ENCODE measurements at regions of chr19 and their contacts with region 1.

Region 1: GRCh38 chr19:19185853-19186740 is 5.9 kb downstream of the BORCS8 start:
- DNase-seq: peak; percentile 89
- ATAC-seq: peak; percentile 100
- H3K4me3 Mint-ChIP-seq: no peak overlapping the region
- H3K27ac Mint-ChIP-seq: peak overlapping the region; percentile 84
- H3K4me1 Mint-ChIP-seq: peaks cover 11% of the 10 kb centered on the region
- H3K27me3 Mint-ChIP-seq: no peaks in the 10 kb centered on the region
- CTCF ChIP-seq: peak; percentile 93

Region 2: DNA sequence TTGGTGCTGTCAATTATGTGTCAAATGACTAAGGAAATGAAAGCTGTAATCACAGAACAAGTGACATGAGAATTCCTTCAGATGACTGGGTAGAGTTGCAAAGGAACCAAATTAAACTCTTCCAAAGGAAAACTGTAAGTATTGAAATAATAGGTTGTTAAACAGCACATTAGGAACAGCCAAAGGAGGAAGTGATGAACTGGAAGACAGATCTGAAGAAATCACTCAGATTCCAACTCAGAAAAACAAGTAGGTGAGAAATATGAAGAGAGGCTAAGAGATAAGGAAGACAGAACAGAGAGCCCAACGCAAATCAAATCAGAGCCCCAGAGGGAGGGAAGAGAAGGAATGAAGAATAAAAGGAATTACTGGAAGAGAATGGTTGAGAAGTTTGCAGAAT is 63.2 kb before region 1 on chr19:
- CTCF ChIA-PET with region 1: no interaction called
- POLR2A ChIA-PET with region 1: no interaction called
- DNase-seq: no peak
- ATAC-seq: no peak
- H3K4me3 Mint-ChIP-seq: no peak overlapping the region
- H3K27ac Mint-ChIP-seq: no peak overlapping the region
- H3K4me1 Mint-ChIP-seq: no peaks in the 10 kb centered on the region
- H3K27me3 Mint-ChIP-seq: no peaks in the 10 kb centered on the region
- CTCF ChIP-seq: no peak

Region 3: DNA sequence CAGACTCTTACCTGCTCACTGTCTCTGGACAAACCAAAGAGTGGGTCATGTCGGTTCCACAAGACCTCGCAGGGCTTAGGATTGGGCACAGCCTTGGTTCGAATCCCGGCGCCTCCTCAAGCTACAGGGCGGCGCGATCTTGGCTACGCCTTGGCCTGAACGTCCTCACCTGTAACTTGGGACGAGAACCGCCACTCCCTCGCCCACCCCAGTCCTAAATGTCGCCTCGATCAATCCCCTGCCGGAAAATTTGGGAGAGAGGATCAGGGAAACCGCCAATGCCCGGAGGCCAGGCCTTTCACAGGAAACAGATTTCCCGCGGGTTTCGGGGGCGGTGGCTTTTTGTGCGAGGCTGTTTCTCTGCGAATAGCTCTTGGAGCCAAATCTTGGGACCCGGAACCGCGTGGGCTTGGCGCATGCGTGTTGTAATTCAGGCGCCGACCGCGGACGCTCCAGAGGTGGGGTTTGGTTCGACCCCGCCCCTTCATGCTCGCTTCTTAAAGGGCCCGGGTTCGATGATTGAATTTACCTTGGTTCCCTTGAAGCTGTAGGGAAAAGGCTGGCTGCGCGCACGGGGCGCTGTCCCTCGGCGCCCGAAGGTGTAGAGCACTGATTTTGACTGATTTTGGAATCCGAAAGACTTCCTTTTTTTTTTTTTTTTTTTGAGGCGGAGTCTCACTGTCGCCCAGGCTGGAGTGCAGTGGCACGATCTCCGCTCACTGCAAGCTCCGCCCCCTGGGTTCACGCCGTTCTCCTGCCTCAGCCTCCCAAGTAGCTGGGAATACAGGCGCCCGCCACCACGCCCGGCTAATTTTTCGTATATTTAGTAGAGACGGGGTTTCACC is 17.1 kb after region 1 on chr19 and contains the start of gene NR2C2AP:
- CTCF ChIA-PET with region 1: interaction called, 17 read pairs
- POLR2A ChIA-PET with region 1: no interaction called
- DNase-seq: peak; percentile 83
- ATAC-seq: peak; percentile 87
- H3K4me3 Mint-ChIP-seq: peak within 1 kb of the TSS; percentile 88
- H3K27ac Mint-ChIP-seq: peak within 1 kb of the TSS; percentile 63; the same call in 1 of the 2 replicates
- H3K4me1 Mint-ChIP-seq: peaks cover 12% of the 10 kb centered on the region
- H3K27me3 Mint-ChIP-seq: peaks cover 47% of the 10 kb centered on the region
- CTCF ChIP-seq: no peak
- total RNA-seq, gene NR2C2AP: 22.7 to 24.9 TPM (median 23.4 TPM) in 3 replicates

Measured in WTC11 (cell line).